HEK293 (cell line): ENCODE measurements at regions of chr21 and their contacts with region 1.

Region 1: DNA sequence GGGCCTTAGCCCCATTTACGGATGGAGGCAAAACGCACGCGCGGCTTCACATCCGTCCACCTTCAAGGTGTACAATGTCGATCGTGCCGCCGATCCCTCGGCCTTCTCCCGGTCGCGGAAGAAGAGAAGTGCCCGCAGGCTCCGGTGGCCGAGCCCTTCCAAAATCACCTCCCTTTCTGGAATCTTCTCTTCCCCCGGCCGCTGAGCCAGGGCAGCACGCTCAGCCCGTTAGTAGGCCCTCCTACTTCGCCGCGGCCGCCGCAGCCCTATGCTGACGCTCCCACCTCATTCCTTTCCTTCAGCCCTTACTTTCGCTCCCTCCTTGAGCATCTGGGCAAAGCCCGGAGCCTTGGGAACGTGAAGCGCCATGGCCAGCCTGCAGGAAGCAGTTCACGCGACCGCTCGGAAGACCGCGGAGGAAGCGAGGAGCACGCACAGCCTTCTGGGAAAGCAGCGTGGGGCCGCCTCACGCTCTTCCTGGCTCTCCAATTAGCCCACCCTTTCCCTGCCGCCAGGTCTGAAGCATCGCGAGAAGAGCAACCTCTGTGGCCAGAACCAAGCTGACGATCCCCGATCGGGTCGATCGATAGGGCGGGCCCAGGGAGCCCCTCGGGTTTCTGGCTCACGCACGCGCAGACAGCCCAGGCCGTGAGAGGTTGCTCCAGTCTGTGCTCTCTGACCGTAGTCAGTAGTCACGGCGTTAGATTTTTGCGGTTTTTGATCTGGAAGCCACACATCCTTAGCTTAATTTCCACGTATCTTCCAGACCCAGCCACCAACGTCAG is at the start of gene CCT8:
- H3K4me3 ChIP-seq: peak within 1 kb of the TSS; percentile 85
- H3K27ac ChIP-seq: peak within 1 kb of the TSS; percentile 82
- H3K4me1 ChIP-seq: peaks cover 15% of the 10 kb centered on the region; the same call in 1 of the 2 replicates
- CTCF ChIP-seq: no peak

Region 2: GRCh38 chr21:28992526-28993292 is 80.7 kb before region 1 on chr21 and contains the start of gene LTN1:
- CTCF ChIA-PET with region 1: no interaction called
- POLR2A ChIA-PET with region 1: interaction called, 13 read pairs
- H3K4me3 ChIP-seq: peak within 1 kb of the TSS; percentile 64
- H3K27ac ChIP-seq: peak within 1 kb of the TSS; percentile 64
- H3K4me1 ChIP-seq: peaks cover 2% of the 10 kb centered on the region; the same call in 1 of the 2 replicates
- CTCF ChIP-seq: no peak

Region 3: DNA sequence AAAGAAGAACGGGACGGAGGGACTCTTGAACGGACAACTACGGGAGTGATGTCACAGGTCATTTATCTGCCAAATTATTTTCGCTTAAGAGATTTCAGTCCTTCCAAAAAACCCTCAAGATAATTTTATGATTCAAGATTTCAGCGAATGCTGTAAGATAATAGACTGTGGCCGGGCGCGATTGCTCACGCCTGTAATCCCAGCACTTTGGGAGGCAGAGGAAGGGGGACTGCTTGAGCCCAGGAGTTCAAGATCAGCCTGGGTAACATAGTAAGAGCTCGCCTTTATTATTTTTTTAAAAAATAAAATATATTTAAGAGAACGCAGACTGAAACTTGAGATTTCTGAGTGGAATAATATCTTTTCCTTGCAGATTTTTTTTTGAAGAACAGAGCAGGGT is 54.9 kb before region 1 on chr21:
- CTCF ChIA-PET with region 1: no interaction called
- POLR2A ChIA-PET with region 1: interaction called, 10 read pairs
- H3K4me3 ChIP-seq: peak overlapping the region; percentile 90
- H3K27ac ChIP-seq: peak overlapping the region; percentile 77; the same call in 1 of the 2 replicates
- H3K4me1 ChIP-seq: no peaks in the 10 kb centered on the region
- CTCF ChIP-seq: no peak

Region 4: GRCh38 chr21:29024474-29025327 is 48.7 kb before region 1 on chr21 and contains the start of gene USP16:
- CTCF ChIA-PET with region 1: interaction called, 3 read pairs
- POLR2A ChIA-PET with region 1: interaction called, 27 read pairs
- H3K4me3 ChIP-seq: peak within 1 kb of the TSS; percentile 84
- H3K27ac ChIP-seq: peak within 1 kb of the TSS; percentile 89
- H3K4me1 ChIP-seq: peaks cover 5% of the 10 kb centered on the region; the same call in 1 of the 2 replicates
- CTCF ChIP-seq: peak; percentile 51; the same call in 1 of the 2 replicates